Activated naive CD4-positive, alpha-beta T cell treated with anti-CD3 and anti-CD28 coated beads for 36 hours (primary cell): ENCODE measurements at regions of chr4 and their contacts with region 1.

Region 1: GRCh38 chr4:142846729-142847596 is 862 bp upstream of the INPP4B start:
- DNase-seq: peak; percentile 90
- H3K4me3 Mint-ChIP-seq: peak overlapping the region; percentile 86
- H3K27ac Mint-ChIP-seq: peak overlapping the region; percentile 84
- H3K4me1 Mint-ChIP-seq: peaks cover 15% of the 10 kb centered on the region
- H3K27me3 Mint-ChIP-seq: no peaks in the 10 kb centered on the region

Region 2: DNA sequence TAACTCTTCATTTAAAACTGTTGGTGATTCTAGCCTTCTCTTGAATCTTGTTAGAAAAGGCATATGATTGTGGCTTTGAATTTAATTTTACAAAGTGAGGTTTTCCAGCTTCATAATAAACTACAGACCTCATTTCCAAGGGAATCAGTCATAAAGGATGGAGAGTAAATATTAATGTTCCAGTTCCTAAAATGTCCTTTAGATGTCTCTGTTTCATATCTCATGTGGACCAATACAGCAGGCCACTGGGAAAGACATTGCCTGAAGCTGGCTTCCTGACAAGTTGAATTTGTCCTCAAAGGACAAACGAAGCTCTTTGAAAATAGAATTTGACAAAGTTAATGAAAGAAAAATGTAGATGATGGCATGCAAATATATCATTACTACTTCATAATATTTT is 1500.8 kb before region 1 on chr4:
- CTCF ChIA-PET with region 1: no interaction called
- intact Hi-C with region 1: loop called (anchors 1 kb)
- DNase-seq: no peak
- H3K4me3 Mint-ChIP-seq: no peak overlapping the region
- H3K27ac Mint-ChIP-seq: no peak overlapping the region
- H3K4me1 Mint-ChIP-seq: no peaks in the 10 kb centered on the region
- H3K27me3 Mint-ChIP-seq: peaks cover 6% of the 10 kb centered on the region

Region 3: GRCh38 chr4:142126890-142127497 is 720.0 kb before region 1 on chr4:
- CTCF ChIA-PET with region 1: no interaction called
- intact Hi-C with region 1: loop called (anchors 1 kb)
- DNase-seq: peak; percentile 81
- H3K4me3 Mint-ChIP-seq: no peak overlapping the region
- H3K27ac Mint-ChIP-seq: no peak overlapping the region
- H3K4me1 Mint-ChIP-seq: peaks cover 37% of the 10 kb centered on the region
- H3K27me3 Mint-ChIP-seq: no peaks in the 10 kb centered on the region

Region 4: DNA sequence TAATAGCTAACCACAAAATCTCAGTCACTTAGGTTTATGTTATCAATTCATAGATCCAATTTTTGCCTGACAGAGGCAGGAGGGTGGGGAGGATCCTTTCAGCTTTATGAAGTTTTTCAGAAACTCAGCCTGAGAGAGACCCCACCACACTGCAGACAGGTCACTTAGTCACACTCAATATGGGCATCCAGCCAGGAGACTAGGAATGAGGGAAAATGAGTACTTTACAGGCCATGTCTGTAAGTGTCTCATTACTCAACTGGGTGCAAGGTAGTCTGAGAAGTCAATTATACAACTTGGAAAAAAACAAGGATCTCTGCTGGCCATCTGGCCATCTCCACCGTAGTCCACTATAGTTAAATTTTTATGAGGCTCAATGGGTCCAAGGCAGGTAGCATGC is 366.7 kb before region 1 on chr4:
- CTCF ChIA-PET with region 1: no interaction called
- intact Hi-C with region 1: loop called (anchors 1 kb)
- DNase-seq: no peak
- H3K4me3 Mint-ChIP-seq: no peak overlapping the region
- H3K27ac Mint-ChIP-seq: no peak overlapping the region
- H3K4me1 Mint-ChIP-seq: peaks cover 27% of the 10 kb centered on the region
- H3K27me3 Mint-ChIP-seq: no peaks in the 10 kb centered on the region

Region 5: GRCh38 chr4:142817442-142817841 is 29.5 kb before region 1 on chr4:
- CTCF ChIA-PET with region 1: interaction called, 3 read pairs
- intact Hi-C with region 1: loop called (anchors 1 kb)
- DNase-seq: peak; percentile 80
- H3K4me3 Mint-ChIP-seq: peak overlapping the region; percentile 27
- H3K27ac Mint-ChIP-seq: peak overlapping the region; percentile 30
- H3K4me1 Mint-ChIP-seq: peaks cover 23% of the 10 kb centered on the region
- H3K27me3 Mint-ChIP-seq: no peaks in the 10 kb centered on the region